ENCODE measurements at regions of chr10 and their contacts with region 1.

Region 1: GRCh38 chr10:96850825-96851224 is 18.7 kb downstream of the LCOR start:
- DNase-seq: no peak
- H3K4me3 ChIP-seq: no peak overlapping the region
- H3K27ac ChIP-seq: peak overlapping the region; percentile 26 to 71 (median 58)
- H3K4me1 ChIP-seq: peaks cover 26 to 59% (median 45%) of the 10 kb centered on the region in 4 donors
- H3K27me3 ChIP-seq: no peaks in the 10 kb centered on the region
- CTCF ChIP-seq: no peak
- EP300 ChIP-seq: no peak
- POLR2A ChIP-seq: no peak

Region 2: GRCh38 chr10:96906864-96907263 is 56.0 kb after region 1 on chr10:
- intact Hi-C with region 1: loop called (anchors 5 kb)
- DNase-seq: no peak
- H3K4me3 ChIP-seq: no peak overlapping the region
- H3K27ac ChIP-seq: no peak overlapping the region
- H3K4me1 ChIP-seq: peaks cover 8 to 51% (median 33%) of the 10 kb centered on the region in 4 donors
- H3K27me3 ChIP-seq: no peaks in the 10 kb centered on the region
- CTCF ChIP-seq: no peak
- EP300 ChIP-seq: no peak
- POLR2A ChIP-seq: no peak

Region 3: DNA sequence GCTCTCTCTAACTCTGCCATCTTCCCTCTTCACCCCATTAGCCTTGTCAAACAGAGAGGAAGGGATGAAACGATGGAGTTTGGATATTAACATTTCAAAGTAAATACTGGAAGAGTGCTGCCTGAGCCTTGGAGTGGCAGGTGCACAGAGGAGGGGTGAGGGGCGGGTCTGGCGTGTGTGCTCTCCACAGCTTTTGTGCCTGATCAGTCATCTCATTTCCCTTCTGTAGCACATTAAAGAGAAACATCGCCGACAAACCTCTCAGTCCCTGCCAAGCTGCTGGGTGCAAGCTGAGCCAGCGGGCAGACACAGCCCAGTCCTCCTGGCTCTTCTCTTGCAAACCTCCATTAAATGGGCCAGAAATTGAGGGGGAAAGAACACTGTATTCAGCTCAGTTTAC is 258.7 kb after region 1 on chr10:
- intact Hi-C with region 1: no loop called
- DNase-seq: no peak
- H3K4me3 ChIP-seq: no peak overlapping the region
- H3K27ac ChIP-seq: no peak overlapping the region
- H3K4me1 ChIP-seq: peaks cover 0 to 13% (median 0%) of the 10 kb centered on the region in 4 donors
- H3K27me3 ChIP-seq: peaks cover 0 to 25% (median 0%) of the 10 kb centered on the region in 4 donors
- CTCF ChIP-seq: no peak
- EP300 ChIP-seq: no peak
- POLR2A ChIP-seq: no peak